ENCODE measurements at regions of chr9 and their contacts with region 1.

Region 1: GRCh38 chr9:137672907-137673791 is 54.3 kb downstream of the EHMT1 start:
- DNase-seq: peak in 1 of 2 donors; percentile 61
- H3K4me3 ChIP-seq: no peak overlapping the region
- H3K27ac ChIP-seq: no peak overlapping the region
- H3K4me1 ChIP-seq: peaks cover 4 to 6% of the 10 kb centered on the region in 2 donors
- H3K27me3 ChIP-seq: no peaks in the 10 kb centered on the region
- CTCF ChIP-seq: peak; percentile 64 to 85 (median 82)

Region 2: GRCh38 chr9:137762414-137763061 is 89.4 kb after region 1 on chr9:
- intact Hi-C with region 1: loop called (anchors 5 kb)
- DNase-seq: no peak
- H3K4me3 ChIP-seq: no peak overlapping the region
- H3K27ac ChIP-seq: no peak overlapping the region
- H3K4me1 ChIP-seq: no peaks in the 10 kb centered on the region
- H3K27me3 ChIP-seq: no peaks in the 10 kb centered on the region
- CTCF ChIP-seq: no peak